ENCODE measurements at regions of chr11 and their contacts with region 1.

Region 1: GRCh38 chr11:506238-506994 is 626 bp downstream of the RNH1 start:
- DNase-seq: peak; percentile 98
- H3K4me3 Mint-ChIP-seq: peak overlapping the region; percentile 92
- H3K27ac Mint-ChIP-seq: peak overlapping the region; percentile 99
- H3K4me1 Mint-ChIP-seq: peaks cover 22% of the 10 kb centered on the region
- H3K27me3 Mint-ChIP-seq: no peaks in the 10 kb centered on the region

Region 2: GRCh38 chr11:269146-269890 is 237.1 kb before region 1 on chr11:
- CTCF ChIA-PET with region 1: no interaction called
- intact Hi-C with region 1: loop called (anchors 1 kb)
- DNase-seq: peak; percentile 80
- H3K4me3 Mint-ChIP-seq: peak overlapping the region; percentile 89
- H3K27ac Mint-ChIP-seq: peak overlapping the region; percentile 99
- H3K4me1 Mint-ChIP-seq: peaks cover 36% of the 10 kb centered on the region
- H3K27me3 Mint-ChIP-seq: no peaks in the 10 kb centered on the region

Region 3: GRCh38 chr11:369336-370018 is 136.9 kb before region 1 on chr11 and contains the start of gene B4GALNT4:
- CTCF ChIA-PET with region 1: no interaction called
- intact Hi-C with region 1: no loop called
- DNase-seq: no peak
- H3K4me3 Mint-ChIP-seq: peak within 1 kb of the TSS; percentile 70
- H3K27ac Mint-ChIP-seq: no peak within 1 kb of the TSS
- H3K4me1 Mint-ChIP-seq: peaks cover 13% of the 10 kb centered on the region
- H3K27me3 Mint-ChIP-seq: peaks cover 25% of the 10 kb centered on the region
- total RNA-seq, gene B4GALNT4: 4.1 to 5.2 TPM

Region 4: GRCh38 chr11:406978-407739 is 99.3 kb before region 1 on chr11:
- CTCF ChIA-PET with region 1: interaction called, 4 read pairs
- intact Hi-C with region 1: loop called (anchors 1 kb)
- DNase-seq: peak; percentile 91
- H3K4me3 Mint-ChIP-seq: peak overlapping the region; percentile 58
- H3K27ac Mint-ChIP-seq: no peak overlapping the region
- H3K4me1 Mint-ChIP-seq: peaks cover 2% of the 10 kb centered on the region
- H3K27me3 Mint-ChIP-seq: no peaks in the 10 kb centered on the region

Region 5: GRCh38 chr11:429931-430456 is 76.4 kb before region 1 on chr11:
- CTCF ChIA-PET with region 1: no interaction called
- intact Hi-C with region 1: no loop called
- DNase-seq: no peak
- H3K4me3 Mint-ChIP-seq: no peak overlapping the region
- H3K27ac Mint-ChIP-seq: no peak overlapping the region
- H3K4me1 Mint-ChIP-seq: no peaks in the 10 kb centered on the region
- H3K27me3 Mint-ChIP-seq: no peaks in the 10 kb centered on the region

Region 6: GRCh38 chr11:518463-519250 is 12.2 kb after region 1 on chr11:
- CTCF ChIA-PET with region 1: interaction called, 19 read pairs
- intact Hi-C with region 1: loop called (anchors 1 kb)
- DNase-seq: peak; percentile 87
- H3K4me3 Mint-ChIP-seq: peak overlapping the region; percentile 84
- H3K27ac Mint-ChIP-seq: peak overlapping the region; percentile 76
- H3K4me1 Mint-ChIP-seq: peaks cover 4% of the 10 kb centered on the region
- H3K27me3 Mint-ChIP-seq: no peaks in the 10 kb centered on the region

Region 7: GRCh38 chr11:575996-576768 is 69.8 kb after region 1 on chr11 and contains the start of gene PHRF1:
- CTCF ChIA-PET with region 1: no interaction called
- intact Hi-C with region 1: loop called (anchors 1 kb)
- DNase-seq: peak; percentile 96
- H3K4me3 Mint-ChIP-seq: peak within 1 kb of the TSS; percentile 88
- H3K27ac Mint-ChIP-seq: peak within 1 kb of the TSS; percentile 99
- H3K4me1 Mint-ChIP-seq: peaks cover 48% of the 10 kb centered on the region
- H3K27me3 Mint-ChIP-seq: peaks cover 6% of the 10 kb centered on the region
- total RNA-seq, gene PHRF1: 25.6 to 26.1 TPM

Region 8: DNA sequence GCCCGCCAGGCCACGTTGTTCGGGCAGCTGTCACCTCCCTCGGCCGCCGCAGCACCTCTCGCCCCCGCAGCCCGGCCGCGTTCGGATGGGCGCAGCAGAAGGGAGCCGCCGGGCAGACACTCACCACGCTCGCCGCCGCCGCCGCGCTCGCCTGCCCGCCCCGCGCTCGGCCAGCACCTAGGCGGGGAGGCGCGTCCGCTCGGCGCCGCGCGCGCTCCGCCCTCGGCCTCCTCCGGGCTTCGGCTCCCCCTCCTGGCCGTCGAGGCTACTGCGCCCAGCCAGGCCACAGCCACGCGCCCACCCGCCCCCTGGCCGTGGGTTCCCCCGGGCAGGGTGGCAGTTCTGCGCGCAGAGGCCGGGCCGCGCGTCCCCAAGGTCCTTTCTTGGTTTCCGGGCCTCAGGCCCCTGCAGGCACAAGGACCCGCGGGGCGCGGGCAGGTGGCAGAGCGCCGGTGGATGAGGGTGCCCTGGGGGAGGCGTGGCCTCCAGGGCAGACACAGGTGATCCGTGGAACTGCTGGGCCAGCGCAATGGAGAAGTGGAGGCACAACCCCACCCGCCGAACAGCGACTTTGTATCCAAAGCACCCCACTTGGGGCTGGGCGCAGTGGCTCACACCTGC is 291.8 kb after region 1 on chr11 and contains the start of gene SLC25A22:
- CTCF ChIA-PET with region 1: no interaction called
- intact Hi-C with region 1: loop called (anchors 2 kb)
- DNase-seq: peak; percentile 82
- H3K4me3 Mint-ChIP-seq: peak within 1 kb of the TSS; percentile 86
- H3K27ac Mint-ChIP-seq: peak within 1 kb of the TSS; percentile 37
- H3K4me1 Mint-ChIP-seq: peaks cover 15% of the 10 kb centered on the region
- H3K27me3 Mint-ChIP-seq: no peaks in the 10 kb centered on the region
- total RNA-seq, gene SLC25A22: 19.1 to 21.8 TPM

Measured in activated naive CD4-positive, alpha-beta T cell treated with anti-CD3 and anti-CD28 coated beads for 36 hours (primary cell).